ENCODE measurements at regions of chr10 and their contacts with region 1.

Region 1: GRCh38 chr10:3365630-3366029 is 193.0 kb upstream of the PITRM1 start:
- DNase-seq: no peak
- ATAC-seq: no peak
- H3K4me3 ChIP-seq: no peak overlapping the region
- H3K27ac ChIP-seq: no peak overlapping the region
- H3K4me1 ChIP-seq: peaks cover 9% of the 10 kb centered on the region; the same call in 1 of the 2 replicates
- H3K27me3 ChIP-seq: no peaks in the 10 kb centered on the region
- CTCF ChIP-seq: no peak
- POLR2A ChIP-seq: no peak
- RAD21 ChIP-seq: no peak

Region 2: DNA sequence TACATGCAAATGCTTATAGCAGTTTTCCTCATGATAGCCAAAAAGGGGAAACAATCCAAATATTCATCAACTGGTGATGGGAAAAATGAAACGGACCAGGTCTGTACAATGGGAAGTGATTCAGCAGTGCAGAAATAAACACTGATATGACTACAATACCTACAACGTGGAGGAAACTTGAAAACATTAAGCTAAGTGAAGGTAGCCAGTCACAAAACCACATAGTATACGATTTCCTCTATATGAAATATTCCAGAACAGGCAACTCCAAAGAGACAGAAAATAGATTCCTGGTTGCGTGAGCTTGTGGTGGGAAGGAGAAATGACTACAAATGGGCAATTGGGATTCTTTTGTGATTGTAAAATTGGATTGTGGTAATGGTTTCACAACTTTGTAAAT is 70.0 kb after region 1 on chr10:
- CTCF ChIA-PET with region 1: no interaction called
- POLR2A ChIA-PET with region 1: no interaction called
- dilution Hi-C with region 1: no loop called
- in situ Hi-C with region 1: no loop called
- intact Hi-C with region 1: loop called (anchors 2 kb)
- DNase-seq: peak; percentile 84
- ATAC-seq: peak; percentile 54
- H3K4me3 ChIP-seq: no peak overlapping the region
- H3K27ac ChIP-seq: peak overlapping the region; percentile 22; the same call in 1 of the 2 replicates
- H3K4me1 ChIP-seq: peaks cover 7% of the 10 kb centered on the region
- H3K27me3 ChIP-seq: no peaks in the 10 kb centered on the region
- CTCF ChIP-seq: no peak
- POLR2A ChIP-seq: no peak
- RAD21 ChIP-seq: no peak